Activated CD4-positive, alpha-beta T cell treated with anti-CD3 and anti-CD28 coated beads for 36 hours (primary cell): ENCODE measurements at regions of chr2 and their contacts with region 1.

Region 1: DNA sequence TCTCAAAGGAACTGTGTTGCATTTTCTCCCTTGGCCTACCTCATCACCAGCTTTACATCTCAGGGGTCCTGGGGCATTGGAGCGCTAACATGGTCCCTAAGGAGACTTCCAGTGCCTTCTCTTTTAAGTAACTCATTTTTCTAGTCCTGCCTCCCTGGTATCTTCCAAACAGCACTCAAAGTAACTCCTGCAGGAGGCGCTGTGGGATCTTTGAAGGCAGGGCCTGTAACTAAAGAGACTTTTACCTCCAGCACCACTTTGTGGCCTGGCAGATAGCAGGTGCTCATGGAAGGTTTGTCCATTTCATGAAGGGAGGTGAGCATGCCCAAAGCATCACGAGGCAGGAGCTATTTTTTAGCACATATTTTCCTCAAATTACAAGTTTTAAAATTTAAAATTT is 411.0 kb upstream of the GYPC start:
- DNase-seq: peak; percentile 76
- ATAC-seq: no peak
- H3K4me3 Mint-ChIP-seq: no peak overlapping the region
- H3K27ac Mint-ChIP-seq: no peak overlapping the region
- H3K4me1 Mint-ChIP-seq: no peaks in the 10 kb centered on the region
- H3K27me3 Mint-ChIP-seq: peaks cover 11% of the 10 kb centered on the region

Region 2: GRCh38 chr2:125736306-125736705 is 508.6 kb before region 1 on chr2:
- CTCF ChIA-PET with region 1: no interaction called
- POLR2A ChIA-PET with region 1: no interaction called
- intact Hi-C with region 1: no loop called
- DNase-seq: no peak
- ATAC-seq: no peak
- H3K4me3 Mint-ChIP-seq: no peak overlapping the region
- H3K27ac Mint-ChIP-seq: no peak overlapping the region
- H3K4me1 Mint-ChIP-seq: no peaks in the 10 kb centered on the region
- H3K27me3 Mint-ChIP-seq: no peaks in the 10 kb centered on the region

Region 3: GRCh38 chr2:126482582-126483464 is 237.9 kb after region 1 on chr2:
- CTCF ChIA-PET with region 1: no interaction called
- POLR2A ChIA-PET with region 1: no interaction called
- intact Hi-C with region 1: loop called in 1 of 2 experiments (anchors 5 kb)
- DNase-seq: peak; percentile 32
- ATAC-seq: no peak
- H3K4me3 Mint-ChIP-seq: no peak overlapping the region
- H3K27ac Mint-ChIP-seq: no peak overlapping the region
- H3K4me1 Mint-ChIP-seq: no peaks in the 10 kb centered on the region
- H3K27me3 Mint-ChIP-seq: peaks cover 5% of the 10 kb centered on the region

Region 4: GRCh38 chr2:126634273-126634861 is 389.4 kb after region 1 on chr2:
- CTCF ChIA-PET with region 1: no interaction called
- POLR2A ChIA-PET with region 1: no interaction called
- intact Hi-C with region 1: loop called in 1 of 2 experiments (anchors 10 kb)
- DNase-seq: peak; percentile 53
- ATAC-seq: no peak
- H3K4me3 Mint-ChIP-seq: no peak overlapping the region
- H3K27ac Mint-ChIP-seq: no peak overlapping the region
- H3K4me1 Mint-ChIP-seq: peaks cover 2% of the 10 kb centered on the region
- H3K27me3 Mint-ChIP-seq: peaks cover 4% of the 10 kb centered on the region